SK-N-SH (cell line): ENCODE measurements at regions of chr11 and their contacts with region 1.

Region 1: DNA sequence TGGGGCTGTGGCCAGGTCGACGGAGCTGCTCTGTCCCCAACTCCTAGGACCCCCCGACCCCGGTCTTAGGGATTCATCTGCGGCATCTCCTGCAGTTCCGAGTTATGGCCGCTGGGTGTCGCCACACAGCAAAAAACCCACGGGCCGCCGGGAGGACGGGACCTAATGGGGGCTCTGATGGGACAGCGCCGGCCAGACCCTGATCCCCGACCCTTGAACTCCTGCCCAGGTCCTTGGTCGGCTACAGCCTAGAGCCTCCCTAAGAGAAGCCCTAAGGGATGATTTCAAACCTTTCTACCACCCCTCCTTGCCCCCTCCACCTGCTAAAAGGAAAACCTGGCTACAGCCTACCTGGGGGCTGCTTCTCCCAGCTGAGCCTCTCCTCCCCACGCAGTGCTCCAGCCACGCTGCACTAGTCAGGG is 30.8 kb upstream of the LRRC10B start:
- DNase-seq: peak; percentile 89
- H3K4me3 ChIP-seq: no peak overlapping the region; a peak in 1 of 4 replicates
- H3K27ac ChIP-seq: no peak overlapping the region
- H3K4me1 ChIP-seq: peaks cover 0 to 12% of the 10 kb centered on the region in 2 experiments; a peak in 1 of 4 replicates
- H3K27me3 ChIP-seq: no peaks in the 10 kb centered on the region
- CTCF ChIP-seq: peak; percentile 92
- EP300 ChIP-seq: no peak
- RAD21 ChIP-seq: peak; percentile 88

Region 2: GRCh38 chr11:61446211-61446651 is 31.5 kb before region 1 on chr11:
- CTCF ChIA-PET with region 1: interaction called, 59 read pairs
- POLR2A ChIA-PET with region 1: no interaction called
- DNase-seq: peak; percentile 78
- H3K4me3 ChIP-seq: no peak overlapping the region; a peak in 1 of 4 replicates
- H3K27ac ChIP-seq: peak overlapping the region; percentile 45 to 53; a peak in 3 of 4 replicates
- H3K4me1 ChIP-seq: peaks cover 5 to 13% of the 10 kb centered on the region in 2 experiments; a peak in 2 of 4 replicates
- H3K27me3 ChIP-seq: no peaks in the 10 kb centered on the region
- CTCF ChIP-seq: peak; percentile 94
- EP300 ChIP-seq: no peak
- RAD21 ChIP-seq: peak; percentile 88

Region 3: DNA sequence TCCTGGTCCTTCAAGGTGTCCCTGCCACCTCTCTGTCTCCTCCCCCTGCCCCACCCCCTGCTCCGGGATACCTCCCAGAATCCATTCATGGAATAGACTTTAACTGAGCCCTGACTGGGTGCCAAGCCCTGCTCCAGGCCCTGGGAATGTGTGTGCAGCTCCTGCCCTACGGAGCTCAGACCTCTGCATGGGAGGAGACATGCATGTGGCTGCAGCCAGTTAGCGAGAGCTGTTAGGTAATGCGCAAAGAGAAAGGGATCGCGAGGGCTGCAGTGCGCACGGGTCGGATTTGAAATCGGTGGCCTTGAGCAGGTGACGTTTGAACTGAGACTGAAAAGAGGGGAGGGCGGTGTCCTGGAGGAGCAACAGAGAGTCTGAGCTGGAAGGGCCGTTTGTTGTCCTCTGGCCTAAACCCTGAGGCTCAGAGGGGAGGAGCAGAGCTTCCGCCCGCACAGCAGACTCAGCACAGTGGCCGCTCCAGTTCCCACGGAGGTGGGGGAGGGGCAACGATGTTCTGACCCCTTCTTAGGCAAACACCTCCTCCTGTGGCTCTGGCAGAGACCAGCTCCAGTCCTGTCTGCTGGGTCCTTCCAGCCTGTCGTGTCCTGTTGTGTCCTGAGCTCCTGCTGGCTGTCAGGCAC is 11.0 kb after region 1 on chr11:
- CTCF ChIA-PET with region 1: interaction called, 31 read pairs
- POLR2A ChIA-PET with region 1: no interaction called
- DNase-seq: peak; percentile 51
- H3K4me3 ChIP-seq: no peak overlapping the region
- H3K27ac ChIP-seq: no peak overlapping the region
- H3K4me1 ChIP-seq: peaks cover 6 to 29% of the 10 kb centered on the region in 2 experiments; a peak in 1 of 4 replicates
- H3K27me3 ChIP-seq: no peaks in the 10 kb centered on the region
- CTCF ChIP-seq: no peak
- EP300 ChIP-seq: no peak
- RAD21 ChIP-seq: no peak

Region 4: GRCh38 chr11:61541598-61541997 is 63.9 kb after region 1 on chr11:
- CTCF ChIA-PET with region 1: interaction called, 670 read pairs
- POLR2A ChIA-PET with region 1: no interaction called
- DNase-seq: peak; percentile 63
- H3K4me3 ChIP-seq: no peak overlapping the region
- H3K27ac ChIP-seq: peak overlapping the region in 1 of 2 experiments; percentile 88; a peak in 2 of 4 replicates
- H3K4me1 ChIP-seq: peaks cover 0 to 63% of the 10 kb centered on the region in 2 experiments; a peak in 2 of 4 replicates
- H3K27me3 ChIP-seq: no peaks in the 10 kb centered on the region
- CTCF ChIP-seq: no peak
- EP300 ChIP-seq: no peak
- RAD21 ChIP-seq: no peak

Region 5: DNA sequence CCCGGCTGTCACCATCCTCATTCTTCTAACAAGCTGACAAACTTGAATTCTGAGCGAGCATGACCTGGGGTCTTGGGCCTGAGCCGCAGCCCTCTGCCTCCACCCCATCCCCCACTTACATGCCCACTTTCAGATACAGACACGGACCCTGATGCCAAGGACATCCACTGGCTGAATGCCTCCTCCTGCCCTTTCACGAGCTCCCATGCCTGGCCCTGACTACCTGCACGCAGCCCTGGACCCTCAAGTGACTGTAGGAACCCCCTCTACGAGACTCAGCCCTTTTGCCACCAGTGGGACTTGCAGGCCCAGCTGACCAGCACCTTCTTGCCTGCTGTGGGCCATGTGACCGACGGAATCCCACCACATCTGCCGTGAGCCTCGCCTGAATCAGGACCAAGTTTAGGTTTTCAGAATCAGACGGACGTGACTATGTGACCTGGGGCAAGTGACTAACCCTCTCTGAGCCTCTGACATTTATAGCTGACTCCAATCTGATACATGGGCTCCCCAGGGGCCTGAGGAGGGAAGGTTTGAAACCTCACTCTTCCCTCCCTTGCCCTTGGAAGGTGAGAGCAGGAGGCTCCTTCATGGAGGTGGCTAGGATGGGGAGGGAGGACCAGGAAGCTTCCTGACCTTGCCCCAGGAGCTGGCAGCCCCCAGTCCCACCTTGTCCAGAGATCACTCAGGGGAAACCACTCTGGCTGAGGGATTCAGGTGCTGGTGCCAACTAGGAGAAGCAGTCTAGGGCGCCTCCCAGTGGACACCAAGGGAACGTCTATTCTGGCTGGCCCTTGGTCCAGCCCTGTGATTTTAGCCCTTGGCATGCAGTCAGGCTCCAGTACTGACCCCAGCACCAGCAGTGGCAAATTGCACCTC is 150.1 kb after region 1 on chr11:
- CTCF ChIA-PET with region 1: interaction called, 131 read pairs
- POLR2A ChIA-PET with region 1: no interaction called
- DNase-seq: peak; percentile 83
- H3K4me3 ChIP-seq: no peak overlapping the region; a peak in 1 of 4 replicates
- H3K27ac ChIP-seq: no peak overlapping the region; a peak in 1 of 4 replicates
- H3K4me1 ChIP-seq: peaks cover 0 to 15% of the 10 kb centered on the region in 2 experiments; a peak in 1 of 4 replicates
- H3K27me3 ChIP-seq: no peaks in the 10 kb centered on the region; the same call in 1 of the 2 replicates
- CTCF ChIP-seq: peak; percentile 87
- EP300 ChIP-seq: 0 out of 4 replicates have a peak, but pooled peaks of 1 of the 2 experiments have one; percentile 28
- RAD21 ChIP-seq: peak; percentile 94

Region 6: DNA sequence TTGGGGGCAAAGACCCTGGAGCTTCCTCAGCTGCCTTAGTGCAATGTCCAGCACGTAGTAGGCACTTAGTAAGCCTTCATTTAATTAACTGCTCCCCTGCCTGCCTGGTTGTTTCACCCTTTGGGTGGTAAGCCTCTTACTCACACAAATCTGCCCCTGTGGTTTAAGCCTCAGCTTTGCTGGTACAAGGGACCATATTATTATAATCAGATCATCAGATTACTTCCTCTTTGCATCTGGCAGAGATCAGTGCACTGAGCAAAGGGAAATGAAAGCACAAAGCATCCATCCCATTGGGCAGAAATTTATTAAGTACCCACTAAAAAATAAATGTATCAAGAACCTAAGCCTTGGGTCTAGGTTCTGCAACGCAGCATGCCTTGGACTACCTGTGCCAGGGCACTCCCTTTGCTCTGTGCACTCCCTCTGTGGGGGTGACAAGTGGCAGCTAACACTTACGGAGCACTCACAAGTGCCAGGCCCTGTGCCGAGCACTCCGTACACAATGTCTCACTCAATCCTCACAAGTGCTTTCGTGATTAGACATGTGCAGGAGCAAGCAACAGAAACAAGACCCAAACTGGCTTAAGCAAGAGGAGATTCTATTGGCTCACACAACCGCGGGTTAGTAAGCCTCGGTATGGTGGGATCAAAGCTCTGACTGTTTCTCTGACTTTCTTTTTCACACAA is 167.6 kb after region 1 on chr11:
- CTCF ChIA-PET with region 1: interaction called, 41 read pairs
- POLR2A ChIA-PET with region 1: no interaction called
- DNase-seq: peak; percentile 59
- H3K4me3 ChIP-seq: no peak overlapping the region
- H3K27ac ChIP-seq: no peak overlapping the region
- H3K4me1 ChIP-seq: peaks cover 0 to 7% of the 10 kb centered on the region in 2 experiments; a peak in 1 of 4 replicates
- H3K27me3 ChIP-seq: no peaks in the 10 kb centered on the region
- CTCF ChIP-seq: no peak
- EP300 ChIP-seq: no peak; a peak in 1 of 4 replicates
- RAD21 ChIP-seq: no peak